Endothelial cell of umbilical vein (primary cell): ENCODE measurements at regions of chr2 and their contacts with region 1.

Region 1: DNA sequence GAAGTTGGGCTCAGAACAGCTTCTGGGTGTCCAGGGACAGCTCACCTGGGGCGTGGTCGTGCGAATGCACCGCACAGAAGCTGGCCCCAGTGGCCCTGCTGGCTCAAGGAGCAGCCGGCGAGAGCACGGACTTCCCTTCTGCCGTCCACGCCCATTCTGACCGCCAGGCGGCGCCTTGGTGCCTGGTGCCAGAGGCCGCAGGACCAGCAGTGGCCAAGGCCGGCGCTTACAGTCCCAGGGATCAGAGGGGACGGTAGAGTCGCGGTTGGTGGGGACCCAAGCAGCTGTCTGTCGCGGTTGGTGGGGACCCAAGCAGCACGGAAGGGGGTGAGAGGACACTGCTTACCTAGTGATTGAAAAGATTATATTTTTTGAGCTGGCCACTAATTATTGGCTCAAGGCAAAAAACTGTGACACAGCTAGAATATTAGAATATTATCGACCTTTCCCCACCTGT is 25.7 kb downstream of the NPPC start:
- DNase-seq: peak; percentile 71
- H3K4me3 ChIP-seq: no peak overlapping the region
- H3K27ac ChIP-seq: no peak overlapping the region
- H3K4me1 ChIP-seq: no peaks in the 10 kb centered on the region
- H3K27me3 ChIP-seq: no peaks in the 10 kb centered on the region
- CTCF ChIP-seq: peak; percentile 96 to 98
- POLR2A ChIP-seq: no peak

Region 2: DNA sequence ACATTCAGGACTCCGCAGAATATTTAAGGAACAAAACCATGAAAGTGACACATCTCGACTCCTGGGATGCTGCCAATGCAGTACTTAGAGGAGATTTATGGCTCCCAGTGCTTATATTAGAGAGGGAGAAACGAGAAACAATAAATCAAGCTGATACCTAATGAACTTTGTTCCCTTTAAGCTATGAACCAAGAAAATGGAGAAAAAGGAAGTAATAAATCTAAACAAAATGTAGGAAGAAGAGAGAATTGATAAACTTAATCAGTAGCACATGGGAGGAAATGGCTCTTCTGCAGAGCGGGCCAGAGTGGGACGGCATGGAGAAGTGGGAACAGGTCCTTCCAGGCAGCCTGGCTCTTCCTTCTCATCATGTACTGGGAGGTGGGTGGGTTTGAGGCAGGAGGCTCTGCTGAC is 17.0 kb before region 1 on chr2:
- CTCF ChIA-PET with region 1: interaction called, 36 read pairs
- POLR2A ChIA-PET with region 1: no interaction called
- dilution Hi-C with region 1: no loop called
- intact Hi-C with region 1: no loop called
- DNase-seq: peak; percentile 33
- H3K4me3 ChIP-seq: no peak overlapping the region
- H3K27ac ChIP-seq: no peak overlapping the region
- H3K4me1 ChIP-seq: no peaks in the 10 kb centered on the region
- H3K27me3 ChIP-seq: peaks cover 4 to 8% of the 10 kb centered on the region in 2 experiments
- CTCF ChIP-seq: no peak
- POLR2A ChIP-seq: no peak

Region 3: GRCh38 chr2:231925303-231926179 is 25.0 kb after region 1 on chr2:
- CTCF ChIA-PET with region 1: interaction called, 27 read pairs
- POLR2A ChIA-PET with region 1: interaction called, 4 read pairs
- dilution Hi-C with region 1: no loop called
- intact Hi-C with region 1: no loop called
- DNase-seq: peak; percentile 76
- H3K4me3 ChIP-seq: peak overlapping the region in 2 of 3 experiments; percentile 30 to 45
- H3K27ac ChIP-seq: no peak overlapping the region
- H3K4me1 ChIP-seq: peaks cover 15% of the 10 kb centered on the region
- H3K27me3 ChIP-seq: peaks cover 43 to 51% of the 10 kb centered on the region in 2 experiments
- CTCF ChIP-seq: peak; percentile 82 to 88
- POLR2A ChIP-seq: no peak

Region 4: GRCh38 chr2:231935815-231936214 is 35.3 kb after region 1 on chr2:
- CTCF ChIA-PET with region 1: no interaction called
- POLR2A ChIA-PET with region 1: no interaction called
- dilution Hi-C with region 1: no loop called
- intact Hi-C with region 1: no loop called
- DNase-seq: no peak
- H3K4me3 ChIP-seq: no peak overlapping the region
- H3K27ac ChIP-seq: no peak overlapping the region
- H3K4me1 ChIP-seq: no peaks in the 10 kb centered on the region
- H3K27me3 ChIP-seq: peaks cover 2 to 8% of the 10 kb centered on the region in 2 experiments
- CTCF ChIP-seq: no peak
- POLR2A ChIP-seq: no peak

Region 5: DNA sequence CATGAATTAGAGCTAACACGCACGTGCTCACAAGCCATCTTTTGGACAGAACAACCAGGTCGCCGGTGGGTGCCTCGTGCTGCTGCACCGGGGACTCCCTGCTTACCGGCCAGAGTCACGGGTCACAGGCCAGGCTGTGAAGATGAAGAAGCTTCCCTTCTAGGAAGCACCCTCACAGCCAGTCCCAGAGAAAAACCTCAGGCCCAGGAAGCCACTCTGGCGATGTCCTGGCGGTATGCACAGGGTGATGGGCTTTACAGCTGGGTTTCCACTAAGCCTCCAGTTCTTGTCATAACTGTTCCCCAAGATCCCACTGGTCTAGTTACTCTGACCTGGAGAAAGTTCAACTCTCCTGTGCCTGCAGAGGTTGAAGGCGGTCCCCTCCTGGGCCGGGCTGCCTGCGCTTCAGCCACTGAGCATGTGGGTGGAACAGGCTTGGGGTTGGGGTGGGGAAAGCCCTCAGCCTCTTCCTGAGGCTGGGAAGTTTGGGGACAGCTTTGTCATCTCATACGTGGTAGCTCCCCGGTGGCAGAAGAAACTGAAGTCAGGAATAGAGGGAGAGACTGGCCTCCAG is 45.8 kb after region 1 on chr2:
- CTCF ChIA-PET with region 1: no interaction called
- POLR2A ChIA-PET with region 1: no interaction called
- dilution Hi-C with region 1: no loop called
- intact Hi-C with region 1: no loop called
- DNase-seq: no peak
- H3K4me3 ChIP-seq: no peak overlapping the region
- H3K27ac ChIP-seq: no peak overlapping the region
- H3K4me1 ChIP-seq: no peaks in the 10 kb centered on the region
- H3K27me3 ChIP-seq: peaks cover 0 to 8% of the 10 kb centered on the region in 2 experiments
- CTCF ChIP-seq: no peak
- POLR2A ChIP-seq: no peak

Region 6: DNA sequence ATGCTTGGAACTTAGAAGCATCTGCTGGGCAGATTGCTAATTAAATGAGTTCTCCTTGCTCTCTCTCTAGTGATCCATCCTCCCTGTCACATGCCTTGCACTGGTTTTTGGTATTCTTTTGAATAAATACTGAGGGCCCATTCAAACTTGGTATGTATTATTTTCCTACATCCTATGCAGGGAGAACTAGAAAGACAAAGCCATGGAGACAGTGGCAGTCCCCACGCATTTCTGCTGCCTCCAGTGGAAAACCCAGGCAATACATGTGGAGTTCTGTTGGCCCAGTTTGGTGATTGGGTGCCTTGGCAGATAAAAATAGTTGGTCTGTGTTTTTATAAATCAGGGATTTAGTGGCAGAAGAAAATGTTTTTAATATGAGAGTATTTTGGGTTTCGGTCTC is 129.7 kb after region 1 on chr2:
- CTCF ChIA-PET with region 1: no interaction called
- POLR2A ChIA-PET with region 1: no interaction called
- dilution Hi-C with region 1: no loop called
- intact Hi-C with region 1: no loop called
- DNase-seq: no peak
- H3K4me3 ChIP-seq: no peak overlapping the region
- H3K27ac ChIP-seq: no peak overlapping the region
- H3K4me1 ChIP-seq: no peaks in the 10 kb centered on the region
- H3K27me3 ChIP-seq: no peaks in the 10 kb centered on the region
- CTCF ChIP-seq: peak in 1 of 2 donors; percentile 30
- POLR2A ChIP-seq: no peak

Region 7: GRCh38 chr2:232292395-232293154 is 392.1 kb after region 1 on chr2:
- CTCF ChIA-PET with region 1: interaction called, 14 read pairs
- POLR2A ChIA-PET with region 1: no interaction called
- dilution Hi-C with region 1: no loop called
- intact Hi-C with region 1: no loop called
- DNase-seq: peak; percentile 57
- H3K4me3 ChIP-seq: no peak overlapping the region
- H3K27ac ChIP-seq: no peak overlapping the region
- H3K4me1 ChIP-seq: no peaks in the 10 kb centered on the region
- H3K27me3 ChIP-seq: no peaks in the 10 kb centered on the region
- CTCF ChIP-seq: peak; percentile 73 to 89
- POLR2A ChIP-seq: no peak

Region 8: GRCh38 chr2:232432598-232433184 is 532.2 kb after region 1 on chr2:
- CTCF ChIA-PET with region 1: interaction called, 26 read pairs
- POLR2A ChIA-PET with region 1: no interaction called
- dilution Hi-C with region 1: no loop called
- intact Hi-C with region 1: no loop called
- DNase-seq: no peak
- H3K4me3 ChIP-seq: no peak overlapping the region
- H3K27ac ChIP-seq: no peak overlapping the region
- H3K4me1 ChIP-seq: no peaks in the 10 kb centered on the region
- H3K27me3 ChIP-seq: peaks cover 0 to 2% of the 10 kb centered on the region in 2 experiments
- CTCF ChIP-seq: peak in 1 of 2 donors; percentile 38
- POLR2A ChIP-seq: no peak

Region 9: GRCh38 chr2:232521959-232522622 is 621.6 kb after region 1 on chr2:
- CTCF ChIA-PET with region 1: interaction called, 9 read pairs
- POLR2A ChIA-PET with region 1: no interaction called
- dilution Hi-C with region 1: no loop called
- intact Hi-C with region 1: loop called (anchors 5 kb)
- DNase-seq: peak; percentile 10
- H3K4me3 ChIP-seq: no peak overlapping the region
- H3K27ac ChIP-seq: no peak overlapping the region
- H3K4me1 ChIP-seq: no peaks in the 10 kb centered on the region
- H3K27me3 ChIP-seq: peaks cover 21 to 31% of the 10 kb centered on the region in 2 experiments
- CTCF ChIP-seq: peak; percentile 63 to 76
- POLR2A ChIP-seq: no peak